ENCODE measurements at regions of chr16 and their contacts with region 1.

Region 1: DNA sequence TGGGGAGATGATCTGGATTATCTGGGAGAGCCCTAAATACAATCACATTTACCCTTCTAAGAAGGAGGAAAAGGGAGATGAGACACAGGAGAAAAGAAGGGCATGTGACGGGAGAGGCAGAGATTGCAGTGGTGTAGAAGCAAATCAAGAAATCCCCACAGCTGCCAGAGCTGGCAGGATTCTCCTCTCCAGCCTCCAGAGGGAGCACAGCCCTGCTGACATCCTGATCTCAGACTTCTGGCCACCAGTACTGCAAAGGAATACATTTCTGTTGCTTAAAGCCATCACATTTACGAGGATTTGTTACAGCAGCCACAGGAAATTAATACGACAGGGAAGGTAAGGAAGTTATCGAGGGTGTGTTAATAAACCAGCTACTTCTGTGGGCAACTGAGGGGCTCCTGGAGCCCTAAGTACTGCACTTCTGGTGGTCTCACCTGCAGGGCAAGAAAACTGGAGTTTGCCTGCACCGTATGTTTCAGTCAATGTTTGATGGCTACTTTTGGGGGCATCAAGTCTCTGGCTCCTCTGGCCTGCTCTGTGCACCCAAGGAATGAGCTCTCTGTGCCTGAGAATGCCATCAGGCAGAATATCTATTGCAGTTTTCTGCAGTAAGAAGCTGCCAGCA is 22.9 kb upstream of the CDH13 start:
- DNase-seq: no peak
- H3K4me3 ChIP-seq: no peak overlapping the region
- H3K27ac ChIP-seq: no peak overlapping the region
- H3K4me1 ChIP-seq: peaks cover 8 to 14% (median 10%) of the 10 kb centered on the region in 4 experiments
- H3K27me3 ChIP-seq: no peaks in the 10 kb centered on the region; a peak in 1 of 7 replicates
- CTCF ChIP-seq: peak; percentile 66 to 82 (median 71)
- EP300 ChIP-seq: no peak
- POLR2A ChIP-seq: no peak
- RAD21 ChIP-seq: peak; percentile 60 to 73

Region 2: GRCh38 chr16:82580298-82580890 is 23.5 kb before region 1 on chr16:
- CTCF ChIA-PET with region 1: interaction called, 23 read pairs
- POLR2A ChIA-PET with region 1: no interaction called
- DNase-seq: no peak
- H3K4me3 ChIP-seq: no peak overlapping the region
- H3K27ac ChIP-seq: no peak overlapping the region
- H3K4me1 ChIP-seq: no peaks in the 10 kb centered on the region
- H3K27me3 ChIP-seq: no peaks in the 10 kb centered on the region
- CTCF ChIP-seq: peak; percentile 35 to 63 (median 54)
- EP300 ChIP-seq: no peak
- POLR2A ChIP-seq: no peak
- RAD21 ChIP-seq: peak; percentile 72 to 80

Region 3: DNA sequence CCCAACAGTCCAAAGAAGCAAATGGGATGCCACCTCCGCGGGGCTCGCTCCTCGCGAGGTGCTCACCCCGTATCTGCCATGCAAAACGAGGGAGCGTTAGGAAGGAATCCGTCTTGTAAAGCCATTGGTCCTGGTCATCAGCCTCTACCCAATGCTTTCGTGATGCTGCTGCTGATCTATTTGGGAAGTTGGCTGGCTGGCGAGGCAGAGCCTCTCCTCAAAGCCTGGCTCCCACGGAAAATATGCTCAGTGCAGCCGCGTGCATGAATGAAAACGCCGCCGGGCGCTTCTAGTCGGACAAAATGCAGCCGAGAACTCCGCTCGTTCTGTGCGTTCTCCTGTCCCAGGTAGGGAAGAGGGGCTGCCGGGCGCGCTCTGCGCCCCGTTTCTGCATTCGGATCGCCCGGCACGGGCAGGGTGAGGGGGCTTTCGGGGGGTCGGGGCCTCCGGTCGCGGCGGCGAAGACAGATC is 22.9 kb after region 1 on chr16 and contains the start of gene CDH13:
- CTCF ChIA-PET with region 1: interaction called, 28 read pairs
- POLR2A ChIA-PET with region 1: interaction called, 3 read pairs
- DNase-seq: peak in 1 of 2 experiments; percentile 60
- H3K4me3 ChIP-seq: peak within 1 kb of the TSS; percentile 55 to 74 (median 62)
- H3K27ac ChIP-seq: no peak within 1 kb of the TSS
- H3K4me1 ChIP-seq: peaks cover 2 to 11% (median 7%) of the 10 kb centered on the region in 4 experiments
- H3K27me3 ChIP-seq: peaks cover 16 to 46% (median 40%) of the 10 kb centered on the region in 4 experiments
- CTCF ChIP-seq: no peak
- EP300 ChIP-seq: no peak
- POLR2A ChIP-seq: no peak
- RAD21 ChIP-seq: no peak
- total RNA-seq, gene CDH13: 2.3 and 2.6 TPM in 2 replicates

Region 4: GRCh38 chr16:82788225-82788624 is 184.3 kb after region 1 on chr16:
- CTCF ChIA-PET with region 1: no interaction called
- POLR2A ChIA-PET with region 1: no interaction called
- DNase-seq: no peak
- H3K4me3 ChIP-seq: no peak overlapping the region
- H3K27ac ChIP-seq: no peak overlapping the region
- H3K4me1 ChIP-seq: peaks cover 0 to 2% (median 1%) of the 10 kb centered on the region in 4 experiments; a peak in 5 of 7 replicates
- H3K27me3 ChIP-seq: no peaks in the 10 kb centered on the region
- CTCF ChIP-seq: no peak
- EP300 ChIP-seq: no peak
- POLR2A ChIP-seq: no peak
- RAD21 ChIP-seq: no peak

Measured in H1 (cell line).